ENCODE measurements at regions of chr1 and their contacts with region 1.

Region 1: GRCh38 chr1:155193275-155193990 is 14.3 kb downstream of the THBS3 start:
- DNase-seq: peak; percentile 89
- CTCF ChIP-seq: peak; percentile 99

Region 2: GRCh38 chr1:155208541-155209311 is 15.3 kb after region 1 on chr1 and contains the start of gene MTX1:
- CTCF ChIA-PET with region 1: interaction called, 76 read pairs
- POLR2A ChIA-PET with region 1: interaction called, 5 read pairs
- DNase-seq: peak; percentile 92
- CTCF ChIP-seq: no peak

Region 3: GRCh38 chr1:155389826-155390225 is 196.4 kb after region 1 on chr1:
- CTCF ChIA-PET with region 1: no interaction called
- POLR2A ChIA-PET with region 1: no interaction called
- DNase-seq: no peak
- CTCF ChIP-seq: no peak

Measured in GM10248 (cell line).